Mucosa of descending colon (tissue), 3 donors: ENCODE measurements at regions of chr5 and their contacts with region 1.

Region 1: DNA sequence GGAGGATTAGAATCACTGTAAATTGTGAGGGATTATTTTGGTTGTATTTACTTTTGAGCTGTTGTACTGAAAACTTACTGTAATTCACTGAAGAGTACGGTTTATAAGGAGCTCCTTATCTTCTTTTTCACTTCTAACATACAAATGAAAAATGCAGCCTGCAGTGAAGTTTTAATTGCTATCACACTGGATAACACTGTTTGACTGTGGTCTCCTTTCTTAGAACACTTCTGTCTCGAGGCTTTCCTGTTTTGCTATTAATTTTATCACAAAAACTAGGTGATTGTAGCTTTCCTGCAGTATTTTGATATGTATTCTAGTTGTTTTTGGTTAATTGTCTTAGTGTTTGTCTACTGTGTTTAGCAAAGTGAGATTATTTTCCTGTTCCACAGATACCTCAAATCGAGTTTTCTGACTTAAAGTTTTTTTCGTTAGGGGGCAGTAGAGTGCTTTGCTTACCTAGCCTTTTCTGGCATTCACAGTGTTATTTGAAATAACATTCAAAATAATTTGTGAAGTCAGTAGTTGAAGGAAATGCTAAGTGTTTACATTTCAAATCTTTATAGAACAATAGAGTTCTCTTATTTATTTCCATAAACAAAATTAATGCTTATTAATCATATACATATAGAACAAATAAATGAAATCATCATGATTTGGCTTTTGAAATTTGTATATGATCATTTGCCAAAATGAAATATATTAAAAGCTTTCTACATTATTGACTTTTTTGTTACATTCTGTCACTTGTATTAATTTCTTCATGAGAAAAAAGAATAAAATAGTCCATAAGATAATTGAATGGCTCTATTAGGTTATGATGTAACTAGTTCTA is 52.9 kb downstream of the COMMD10 start:
- DNase-seq: peak in 1 of 3 donors; percentile 21
- ATAC-seq: peak; percentile 51
- H3K4me3 ChIP-seq: no peak overlapping the region
- H3K4me1 ChIP-seq: no peaks in the 10 kb centered on the region
- CTCF ChIP-seq: peak; percentile 18

Region 2: GRCh38 chr5:116557669-116558271 is 420.0 kb after region 1 on chr5:
- intact Hi-C with region 1: loop called in 1 of 2 experiments (anchors 10 kb)
- DNase-seq: peak in 1 of 3 donors; percentile 54
- ATAC-seq: no peak
- H3K4me3 ChIP-seq: no peak overlapping the region
- H3K4me1 ChIP-seq: peaks cover 29% of the 10 kb centered on the region
- CTCF ChIP-seq: peak; percentile 24

Region 3: DNA sequence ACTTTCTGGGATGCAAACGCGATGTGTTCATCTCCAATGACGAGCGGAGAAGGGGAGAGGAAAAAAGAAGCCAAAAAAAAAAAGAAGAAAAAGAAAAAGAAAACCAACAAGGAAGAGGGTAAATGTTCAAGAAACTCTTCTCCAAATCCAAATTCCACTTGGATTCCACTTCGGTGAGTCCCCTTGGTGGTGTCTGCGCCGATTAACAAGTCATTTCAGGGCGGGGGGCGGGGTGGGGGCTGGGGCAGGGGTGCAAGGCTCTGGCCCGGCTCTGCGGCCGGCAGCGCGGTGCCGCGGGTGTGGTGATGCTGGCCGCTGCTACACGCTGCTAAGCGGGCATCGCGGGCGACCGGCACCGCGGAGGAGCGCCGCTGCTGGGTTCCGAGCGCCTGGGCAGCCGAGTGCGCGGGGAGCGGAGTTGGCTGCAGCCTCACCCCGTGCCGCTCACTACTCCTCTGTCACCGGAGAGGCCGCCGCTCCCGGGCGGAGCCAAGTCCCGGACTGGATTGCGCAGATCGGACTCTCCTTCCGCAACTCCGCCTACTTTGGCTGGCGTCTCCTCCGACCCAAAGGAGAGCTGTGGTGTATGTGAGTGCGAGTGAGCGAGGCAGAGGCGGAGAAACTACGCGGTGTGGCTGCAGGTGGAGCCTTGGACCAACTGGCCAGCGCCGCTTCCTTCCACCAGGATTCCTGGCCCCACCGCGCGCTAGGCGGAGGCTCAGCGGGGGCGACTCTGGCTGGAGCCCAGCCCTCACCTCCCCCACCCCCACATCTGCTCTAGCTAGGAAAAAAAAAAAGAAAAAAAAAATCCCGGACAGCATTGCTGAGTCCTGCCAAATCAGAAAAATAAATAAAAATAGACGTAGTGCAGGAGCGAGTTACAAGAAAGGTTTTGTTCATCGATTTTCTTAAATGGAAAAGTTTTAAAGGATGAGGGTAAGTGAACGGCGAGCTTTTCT is 436.9 kb after region 1 on chr5 and contains the start of gene SEMA6A:
- intact Hi-C with region 1: loop called in 1 of 2 experiments (anchors 10 kb)
- DNase-seq: peak; percentile 94 to 98 (median 97)
- ATAC-seq: peak; percentile 88
- H3K4me3 ChIP-seq: peak within 1 kb of the TSS; percentile 59
- H3K4me1 ChIP-seq: no peaks in the 10 kb centered on the region
- CTCF ChIP-seq: no peak
- total RNA-seq, gene SEMA6A: 90.0 to 137 (median 106) TPM

Region 4: DNA sequence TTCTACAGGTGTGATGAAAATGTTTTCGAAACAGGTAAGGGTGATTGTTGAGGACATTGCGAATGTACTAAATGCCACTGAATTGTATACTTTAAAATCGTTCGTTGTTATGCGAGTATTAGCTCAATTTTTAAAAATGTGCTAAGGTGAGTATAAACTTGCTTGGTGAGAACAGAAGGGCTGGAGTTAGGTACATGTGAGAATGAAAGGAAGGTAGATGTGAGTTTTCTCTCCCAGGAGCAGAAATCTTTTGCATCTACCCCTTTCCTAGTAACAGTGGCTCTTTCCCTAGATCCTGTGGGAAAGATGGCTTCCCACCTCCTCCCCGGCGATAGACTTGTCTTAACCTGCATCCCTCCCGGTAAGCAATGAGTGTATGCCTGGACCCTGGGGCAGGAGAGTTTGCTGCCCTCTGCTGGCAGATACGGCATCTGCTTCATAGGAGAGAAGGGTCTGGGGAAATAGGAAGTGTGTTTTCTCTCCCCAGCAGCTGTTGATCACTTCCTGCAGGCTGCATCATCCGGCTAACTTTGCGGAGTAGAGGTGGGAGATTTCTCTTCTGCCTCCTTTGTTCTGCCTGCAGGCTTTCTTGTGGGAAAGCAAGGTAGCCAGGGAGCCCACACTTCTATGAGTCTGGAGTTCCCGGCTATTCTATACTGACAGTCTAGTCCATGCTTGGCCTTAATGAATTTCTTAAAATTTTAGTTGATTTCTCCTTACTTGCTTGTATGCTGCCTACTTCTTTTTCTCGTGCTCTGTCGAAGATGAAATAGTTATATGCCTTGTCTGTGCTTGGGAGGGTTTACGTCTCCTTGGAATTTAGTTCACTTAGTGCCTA is 810.1 kb after region 1 on chr5:
- intact Hi-C with region 1: loop called in 1 of 2 experiments (anchors 5 kb)
- DNase-seq: peak in 2 of 3 donors; percentile 80 to 86
- ATAC-seq: peak; percentile 94
- H3K4me3 ChIP-seq: no peak overlapping the region
- H3K4me1 ChIP-seq: no peaks in the 10 kb centered on the region
- CTCF ChIP-seq: peak; percentile 51